Esophagus muscularis mucosa (tissue), 4 donors: ENCODE measurements at regions of chr9 and their contacts with region 1.

Region 1: GRCh38 chr9:85940832-85941621 is at the start of gene NAA35:
- DNase-seq: peak; percentile 99
- H3K4me3 ChIP-seq: peak within 1 kb of the TSS; percentile 73 to 97 (median 90)
- H3K27ac ChIP-seq: peak within 1 kb of the TSS; percentile 90 to 98 (median 94)
- H3K4me1 ChIP-seq: peaks cover 21 to 52% (median 47%) of the 10 kb centered on the region in 4 donors
- H3K27me3 ChIP-seq: peaks cover 0 to 6% (median 0%) of the 10 kb centered on the region in 4 donors
- CTCF ChIP-seq: peak in 1 of 3 experiments; percentile 31
- EP300 ChIP-seq: no peak
- POLR2A ChIP-seq: no peak
- total RNA-seq, gene NAA35: 16.4 to 20.8 (median 18.1) TPM

Region 2: DNA sequence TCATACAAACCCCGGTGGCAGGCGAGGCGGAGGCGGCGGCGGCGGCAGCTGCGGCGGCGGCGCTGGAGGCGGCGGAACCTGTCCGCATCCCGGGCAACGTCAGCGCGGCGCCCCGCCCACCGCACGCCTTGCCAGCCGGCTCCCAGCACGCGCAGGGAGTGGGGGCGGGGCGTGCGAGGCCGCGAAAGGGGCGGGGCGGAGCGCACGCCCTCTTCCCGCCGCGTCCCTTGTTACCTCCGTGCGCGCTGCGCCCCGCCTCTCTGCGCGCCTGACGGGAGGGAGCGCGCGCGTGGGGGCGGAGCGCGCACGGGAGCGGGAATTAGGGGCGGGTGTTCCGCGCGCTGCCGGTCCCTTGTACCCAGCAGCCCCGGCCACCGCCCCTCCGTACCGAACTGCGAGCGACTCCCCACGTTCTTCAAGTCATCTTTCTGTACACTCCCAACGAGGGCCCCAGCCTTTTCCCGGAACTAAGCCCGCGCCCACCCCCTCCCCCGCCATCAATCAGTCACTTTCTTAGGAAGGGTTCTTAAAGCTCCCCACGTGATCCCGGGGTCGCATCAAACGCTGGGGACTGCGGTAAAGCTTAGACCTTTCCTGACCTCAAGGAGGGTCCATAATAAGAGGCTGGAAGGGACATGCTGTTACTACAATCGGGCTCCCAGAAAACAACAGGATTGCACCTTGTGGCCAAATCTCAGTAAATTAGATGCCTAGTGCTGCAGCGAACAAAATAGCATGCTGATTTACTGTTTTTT is 199.0 kb before region 1 on chr9 and contains the start of gene AGTPBP1:
- intact Hi-C with region 1: loop called (anchors 10 kb)
- DNase-seq: peak; percentile 97
- H3K4me3 ChIP-seq: peak within 1 kb of the TSS; percentile 87 to 91 (median 90)
- H3K27ac ChIP-seq: peak within 1 kb of the TSS; percentile 84 to 93 (median 88)
- H3K4me1 ChIP-seq: peaks cover 16 to 31% (median 20%) of the 10 kb centered on the region in 4 donors
- H3K27me3 ChIP-seq: peaks cover 0 to 4% (median 0%) of the 10 kb centered on the region in 4 donors
- CTCF ChIP-seq: no peak
- EP300 ChIP-seq: no peak
- POLR2A ChIP-seq: no peak
- total RNA-seq, gene AGTPBP1: 15.9 to 25.3 (median 24.1) TPM